ENCODE measurements at regions of chr11 and their contacts with region 1.

Region 1: GRCh38 chr11:36746886-36747710 is 149.1 kb upstream of the RAG2 start:
- DNase-seq: peak; percentile 76
- H3K4me3 ChIP-seq: peak overlapping the region in 1 of 2 experiments; percentile 39; a peak in 1 of 4 replicates
- H3K27ac ChIP-seq: peak overlapping the region in 1 of 2 experiments; percentile 67; a peak in 2 of 4 replicates
- H3K4me1 ChIP-seq: peaks cover 13 to 18% of the 10 kb centered on the region in 2 experiments
- H3K27me3 ChIP-seq: no peaks in the 10 kb centered on the region
- CTCF ChIP-seq: peak; percentile 99
- EP300 ChIP-seq: no peak
- RAD21 ChIP-seq: peak; percentile 97

Region 2: GRCh38 chr11:36431429-36432092 is 315.5 kb before region 1 on chr11:
- CTCF ChIA-PET with region 1: no interaction called
- POLR2A ChIA-PET with region 1: no interaction called
- DNase-seq: no peak
- H3K4me3 ChIP-seq: no peak overlapping the region
- H3K27ac ChIP-seq: peak overlapping the region in 1 of 2 experiments; percentile 49; a peak in 3 of 4 replicates
- H3K4me1 ChIP-seq: peaks cover 0 to 6% of the 10 kb centered on the region in 2 experiments; a peak in 2 of 4 replicates
- H3K27me3 ChIP-seq: no peaks in the 10 kb centered on the region
- CTCF ChIP-seq: peak; percentile 38
- EP300 ChIP-seq: peak in 1 of 2 experiments; percentile 61; a peak in 1 of 4 replicates
- RAD21 ChIP-seq: no peak

Region 3: GRCh38 chr11:36577859-36578258 is 169.2 kb before region 1 on chr11:
- CTCF ChIA-PET with region 1: interaction called, 10 read pairs
- POLR2A ChIA-PET with region 1: no interaction called
- DNase-seq: no peak
- H3K4me3 ChIP-seq: no peak overlapping the region
- H3K27ac ChIP-seq: peak overlapping the region; percentile 60 to 87
- H3K4me1 ChIP-seq: peaks cover 23 to 30% of the 10 kb centered on the region in 2 experiments; a peak in 3 of 4 replicates
- H3K27me3 ChIP-seq: no peaks in the 10 kb centered on the region
- CTCF ChIP-seq: no peak
- EP300 ChIP-seq: peak in 1 of 2 experiments; percentile 78; a peak in 1 of 4 replicates
- RAD21 ChIP-seq: no peak

Region 4: DNA sequence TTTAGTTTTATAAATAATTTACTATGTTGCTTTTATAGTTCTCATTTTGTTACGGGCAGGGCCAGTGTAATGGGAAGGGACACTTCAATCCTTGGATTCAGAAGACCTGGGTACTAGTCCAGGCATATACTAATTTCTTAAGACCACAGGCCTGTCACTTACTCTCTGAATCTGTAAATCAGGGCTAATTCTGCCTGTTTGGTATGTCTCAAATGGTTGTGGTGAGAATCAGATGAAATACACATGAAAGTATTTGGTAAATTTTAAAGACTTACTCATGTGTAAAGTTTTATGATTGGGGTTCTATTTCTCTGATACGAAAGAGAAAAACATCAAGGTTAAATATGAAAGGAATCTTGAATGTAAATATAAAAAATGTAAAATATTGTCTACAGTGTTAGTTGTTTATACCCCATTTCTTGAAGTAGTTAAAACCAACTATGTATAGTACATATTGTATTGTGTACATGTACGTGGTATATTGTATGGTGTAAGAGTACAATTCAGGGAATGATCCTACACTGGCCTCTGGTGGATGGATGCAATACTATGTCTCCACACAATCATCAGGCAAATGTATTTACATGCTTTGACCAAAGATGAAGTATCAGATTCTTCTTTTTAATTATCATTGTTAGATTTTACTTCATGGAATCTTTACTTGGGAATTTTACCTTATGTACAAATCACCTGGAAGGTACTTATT is 124.5 kb before region 1 on chr11:
- CTCF ChIA-PET with region 1: interaction called, 58 read pairs
- POLR2A ChIA-PET with region 1: no interaction called
- DNase-seq: peak; percentile 32
- H3K4me3 ChIP-seq: no peak overlapping the region
- H3K27ac ChIP-seq: peak overlapping the region in 1 of 2 experiments; percentile 100; a peak in 2 of 4 replicates
- H3K4me1 ChIP-seq: peaks cover 16 to 52% of the 10 kb centered on the region in 2 experiments; a peak in 3 of 4 replicates
- H3K27me3 ChIP-seq: no peaks in the 10 kb centered on the region
- CTCF ChIP-seq: peak; percentile 83
- EP300 ChIP-seq: no peak
- RAD21 ChIP-seq: peak; percentile 98

Region 5: DNA sequence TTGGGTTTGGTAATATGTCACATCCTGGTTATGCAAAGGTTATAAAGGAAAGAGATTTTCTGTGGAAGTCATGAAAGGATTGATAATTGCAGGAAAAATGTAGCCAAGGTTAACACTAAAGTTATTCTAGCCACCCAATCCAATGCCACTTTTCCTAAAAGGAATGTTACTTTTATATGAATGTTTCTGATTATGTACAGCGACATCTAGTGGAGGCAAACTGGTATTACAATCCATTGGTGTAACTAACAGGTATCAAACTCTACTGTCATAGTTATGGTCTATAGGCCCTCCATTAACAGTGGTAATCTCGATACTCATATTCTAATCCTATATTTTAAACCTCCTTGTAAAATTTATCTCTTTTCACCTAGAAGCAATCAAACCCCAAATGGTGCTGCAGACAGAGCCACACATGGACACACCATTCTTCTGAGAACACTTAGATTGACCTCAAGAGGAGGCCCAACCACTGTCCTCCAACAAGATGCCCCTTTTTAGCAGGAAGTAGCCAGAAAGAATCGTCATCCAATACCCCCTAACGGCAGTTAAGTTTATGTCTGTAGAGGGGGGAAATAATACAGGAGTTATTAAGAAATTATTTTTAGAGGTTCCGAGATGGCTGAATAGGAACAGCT is 74.2 kb before region 1 on chr11:
- CTCF ChIA-PET with region 1: interaction called, 10 read pairs
- POLR2A ChIA-PET with region 1: no interaction called
- DNase-seq: peak; percentile 33
- H3K4me3 ChIP-seq: no peak overlapping the region
- H3K27ac ChIP-seq: no peak overlapping the region
- H3K4me1 ChIP-seq: no peaks in the 10 kb centered on the region
- H3K27me3 ChIP-seq: no peaks in the 10 kb centered on the region
- CTCF ChIP-seq: peak; percentile 84
- EP300 ChIP-seq: no peak
- RAD21 ChIP-seq: peak; percentile 62

Region 6: DNA sequence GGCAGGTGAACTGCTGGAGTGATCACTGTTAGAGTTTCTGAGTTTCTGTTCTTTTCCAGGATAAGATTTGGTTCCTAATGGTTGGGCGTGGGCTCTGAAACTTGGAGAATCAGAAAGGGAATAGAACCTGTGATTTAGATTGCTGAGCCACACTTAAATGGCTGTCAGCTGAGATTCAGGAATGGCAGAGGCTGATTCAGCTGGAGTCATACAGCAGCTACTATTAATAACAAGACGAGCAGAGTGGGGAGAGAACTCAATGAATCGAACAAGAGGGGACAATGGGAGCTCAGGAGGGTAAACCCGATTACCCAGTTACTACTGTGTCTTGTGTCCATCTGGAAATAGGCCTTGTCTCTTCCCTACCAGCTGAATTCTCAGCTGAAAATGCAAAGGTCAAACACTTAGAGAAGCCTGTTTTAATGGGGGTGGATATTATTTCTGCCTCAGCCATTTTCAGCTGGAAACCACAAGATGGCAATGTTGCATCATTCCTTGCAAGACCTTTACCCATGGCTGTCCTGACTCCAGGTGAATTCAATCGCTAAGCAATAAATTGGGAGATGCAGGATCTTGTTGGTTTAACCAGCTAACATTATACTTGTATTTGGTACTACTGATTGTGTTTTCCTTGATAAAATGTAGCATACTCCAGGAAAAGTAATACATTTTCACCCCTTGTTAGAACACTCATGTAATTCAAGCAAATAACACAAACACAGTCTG is 44.6 kb before region 1 on chr11:
- CTCF ChIA-PET with region 1: interaction called, 290 read pairs
- POLR2A ChIA-PET with region 1: interaction called, 4 read pairs
- DNase-seq: peak; percentile 73
- H3K4me3 ChIP-seq: peak overlapping the region in 1 of 2 experiments; percentile 33; a peak in 1 of 4 replicates
- H3K27ac ChIP-seq: peak overlapping the region in 1 of 2 experiments; percentile 58; a peak in 2 of 4 replicates
- H3K4me1 ChIP-seq: peaks cover 0 to 3% of the 10 kb centered on the region in 2 experiments; a peak in 2 of 4 replicates
- H3K27me3 ChIP-seq: peaks cover under 1% of the 10 kb centered on the region; the same call in 1 of the 2 replicates
- CTCF ChIP-seq: peak; percentile 92
- EP300 ChIP-seq: 0 out of 4 replicates have a peak, but pooled peaks of 1 of the 2 experiments have one; percentile 12
- RAD21 ChIP-seq: peak; percentile 99

Region 7: GRCh38 chr11:36719358-36720107 is 27.6 kb before region 1 on chr11:
- CTCF ChIA-PET with region 1: interaction called, 84 read pairs
- POLR2A ChIA-PET with region 1: no interaction called
- DNase-seq: no peak
- H3K4me3 ChIP-seq: no peak overlapping the region
- H3K27ac ChIP-seq: no peak overlapping the region
- H3K4me1 ChIP-seq: no peaks in the 10 kb centered on the region
- H3K27me3 ChIP-seq: peaks cover 6% of the 10 kb centered on the region; the same call in 1 of the 2 replicates
- CTCF ChIP-seq: no peak
- EP300 ChIP-seq: no peak
- RAD21 ChIP-seq: no peak

Region 8: DNA sequence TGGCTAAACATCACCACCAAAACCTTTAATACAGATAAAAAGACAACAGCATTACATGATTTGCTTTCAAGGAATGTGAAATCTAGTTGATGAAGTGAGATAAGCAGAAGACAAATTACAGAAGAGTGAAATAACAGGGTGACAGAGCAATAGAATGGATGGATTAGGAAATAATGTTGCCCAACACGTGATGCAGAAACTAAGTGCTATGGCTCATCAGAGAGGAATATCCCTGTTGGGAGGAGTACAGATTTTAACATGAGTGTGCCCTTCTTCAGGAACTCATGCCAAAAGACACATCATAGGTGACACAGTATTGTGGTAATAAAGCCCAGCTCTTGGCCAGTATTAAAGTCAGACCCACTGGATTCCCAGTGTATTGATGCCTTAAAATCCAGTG is 27.5 kb after region 1 on chr11:
- CTCF ChIA-PET with region 1: interaction called, 14 read pairs
- POLR2A ChIA-PET with region 1: no interaction called
- DNase-seq: no peak
- H3K4me3 ChIP-seq: no peak overlapping the region; a peak in 1 of 4 replicates
- H3K27ac ChIP-seq: peak overlapping the region; percentile 56 to 98; a peak in 3 of 4 replicates
- H3K4me1 ChIP-seq: peaks cover 0 to 4% of the 10 kb centered on the region in 2 experiments; a peak in 2 of 4 replicates
- H3K27me3 ChIP-seq: no peaks in the 10 kb centered on the region
- CTCF ChIP-seq: no peak
- EP300 ChIP-seq: peak in 1 of 2 experiments; percentile 100; a peak in 2 of 4 replicates
- RAD21 ChIP-seq: no peak